Common myeloid progenitor, CD34-positive (primary cell): ENCODE measurements at regions of chr5 and their contacts with region 1.

Region 1: DNA sequence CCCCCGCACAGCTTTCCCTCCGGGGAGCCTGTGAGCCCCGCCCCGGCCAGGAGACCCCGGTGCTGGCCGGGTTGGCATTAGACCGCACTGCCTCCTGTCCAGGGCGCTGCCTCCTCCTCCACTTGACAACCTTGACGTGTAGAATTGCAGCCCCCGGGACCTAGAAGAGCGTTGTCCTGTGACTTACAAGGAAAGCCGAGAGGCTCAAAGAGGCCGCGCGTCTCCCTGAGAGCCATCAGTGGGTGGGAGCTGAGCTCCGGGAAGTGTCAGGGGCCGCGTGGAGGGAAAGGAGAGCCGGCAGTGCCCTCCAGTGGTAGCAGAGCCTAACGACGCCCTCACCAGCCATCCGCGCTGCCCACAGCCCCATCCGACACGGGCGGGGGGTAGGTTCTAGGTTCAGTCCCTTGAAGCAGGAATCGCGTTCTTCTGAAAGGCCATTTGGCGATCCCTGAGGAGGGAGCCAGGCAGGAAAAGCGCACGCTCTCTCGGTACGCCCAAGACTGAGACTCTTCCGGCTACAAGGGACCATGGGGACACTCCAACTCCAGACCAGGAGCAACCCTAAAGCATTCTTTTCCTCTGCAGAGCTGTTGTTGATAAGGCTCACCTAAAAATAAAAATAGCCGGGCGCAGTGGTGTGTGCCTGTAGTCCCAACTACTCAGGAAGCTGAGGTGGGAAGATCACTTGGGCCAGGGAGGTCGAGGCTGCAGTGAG is 40.6 kb upstream of the SAP30L start:
- DNase-seq: peak; percentile 65 to 78 (median 75)
- H3K4me3 ChIP-seq: peak overlapping the region; percentile 30 to 71 (median 59)
- H3K27ac ChIP-seq: no peak overlapping the region
- H3K4me1 ChIP-seq: peaks cover 0 to 24% (median 22%) of the 10 kb centered on the region in 4 experiments
- H3K27me3 ChIP-seq: no peaks in the 10 kb centered on the region

Region 2: GRCh38 chr5:153974131-153974812 is 431.0 kb before region 1 on chr5:
- CTCF ChIA-PET with region 1: interaction called, 17 read pairs
- POLR2A ChIA-PET with region 1: no interaction called
- DNase-seq: peak; percentile 42 to 77 (median 73)
- H3K4me3 ChIP-seq: no peak overlapping the region
- H3K27ac ChIP-seq: no peak overlapping the region
- H3K4me1 ChIP-seq: peaks cover 0 to 4% (median 0%) of the 10 kb centered on the region in 4 experiments
- H3K27me3 ChIP-seq: peaks cover 0 to 3% (median 0%) of the 10 kb centered on the region in 5 experiments

Region 3: DNA sequence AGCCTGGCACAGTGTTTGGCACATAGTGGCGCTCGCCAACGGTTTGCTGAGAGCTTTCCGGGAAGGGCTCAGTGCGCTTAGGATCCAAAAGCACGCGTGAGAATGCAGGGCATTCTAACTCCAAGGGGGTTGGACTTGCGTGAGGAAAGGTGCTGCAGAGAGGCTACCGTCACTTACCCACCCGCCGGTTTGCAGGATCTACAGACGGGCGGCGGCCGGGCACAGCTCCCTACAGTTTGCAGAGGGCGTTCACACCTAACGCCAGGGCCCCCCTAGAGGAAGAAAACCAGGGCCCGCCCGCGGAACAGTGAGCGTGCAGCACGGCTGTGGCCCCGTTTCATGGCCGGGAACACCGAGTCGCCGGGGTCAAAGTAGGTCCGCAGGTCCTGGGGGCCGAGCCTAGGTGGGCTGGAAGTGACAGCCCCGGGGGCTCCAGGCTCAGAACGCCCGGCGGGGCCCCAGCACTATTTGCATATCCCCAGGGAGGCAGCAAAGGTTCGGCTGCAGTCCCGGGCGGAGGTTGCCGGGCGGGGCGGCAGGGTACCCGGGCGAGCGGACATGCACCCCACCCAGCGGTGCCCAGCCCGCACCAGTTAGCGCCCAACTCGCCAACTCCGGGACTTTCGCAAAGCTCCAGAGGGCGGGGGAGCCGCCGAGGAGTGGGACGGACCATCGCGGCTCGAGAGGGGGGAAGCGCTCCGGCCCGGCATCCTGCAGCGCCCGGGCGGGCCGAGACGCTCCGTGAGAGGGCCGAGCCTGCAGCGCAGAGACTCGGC is 215.2 kb before region 1 on chr5:
- CTCF ChIA-PET with region 1: interaction called, 10 read pairs
- POLR2A ChIA-PET with region 1: no interaction called
- DNase-seq: peak; percentile 77 to 89 (median 89)
- H3K4me3 ChIP-seq: peak overlapping the region; percentile 68 to 84 (median 74)
- H3K27ac ChIP-seq: peak overlapping the region in 1 of 2 experiments; percentile 68
- H3K4me1 ChIP-seq: peaks cover 7 to 23% (median 18%) of the 10 kb centered on the region in 4 experiments
- H3K27me3 ChIP-seq: peaks cover 0 to 9% (median 4%) of the 10 kb centered on the region in 5 experiments

Region 4: GRCh38 chr5:154196955-154197652 is 208.1 kb before region 1 on chr5:
- CTCF ChIA-PET with region 1: interaction called, 10 read pairs
- POLR2A ChIA-PET with region 1: no interaction called
- DNase-seq: peak; percentile 81 to 92 (median 87)
- H3K4me3 ChIP-seq: peak overlapping the region in 5 of 7 experiments; percentile 13 to 59 (median 30)
- H3K27ac ChIP-seq: peak overlapping the region in 1 of 2 experiments; percentile 68
- H3K4me1 ChIP-seq: peaks cover 9 to 52% (median 35%) of the 10 kb centered on the region in 4 experiments
- H3K27me3 ChIP-seq: no peaks in the 10 kb centered on the region